ENCODE measurements at regions of chr15 and their contacts with region 1.

Region 1: DNA sequence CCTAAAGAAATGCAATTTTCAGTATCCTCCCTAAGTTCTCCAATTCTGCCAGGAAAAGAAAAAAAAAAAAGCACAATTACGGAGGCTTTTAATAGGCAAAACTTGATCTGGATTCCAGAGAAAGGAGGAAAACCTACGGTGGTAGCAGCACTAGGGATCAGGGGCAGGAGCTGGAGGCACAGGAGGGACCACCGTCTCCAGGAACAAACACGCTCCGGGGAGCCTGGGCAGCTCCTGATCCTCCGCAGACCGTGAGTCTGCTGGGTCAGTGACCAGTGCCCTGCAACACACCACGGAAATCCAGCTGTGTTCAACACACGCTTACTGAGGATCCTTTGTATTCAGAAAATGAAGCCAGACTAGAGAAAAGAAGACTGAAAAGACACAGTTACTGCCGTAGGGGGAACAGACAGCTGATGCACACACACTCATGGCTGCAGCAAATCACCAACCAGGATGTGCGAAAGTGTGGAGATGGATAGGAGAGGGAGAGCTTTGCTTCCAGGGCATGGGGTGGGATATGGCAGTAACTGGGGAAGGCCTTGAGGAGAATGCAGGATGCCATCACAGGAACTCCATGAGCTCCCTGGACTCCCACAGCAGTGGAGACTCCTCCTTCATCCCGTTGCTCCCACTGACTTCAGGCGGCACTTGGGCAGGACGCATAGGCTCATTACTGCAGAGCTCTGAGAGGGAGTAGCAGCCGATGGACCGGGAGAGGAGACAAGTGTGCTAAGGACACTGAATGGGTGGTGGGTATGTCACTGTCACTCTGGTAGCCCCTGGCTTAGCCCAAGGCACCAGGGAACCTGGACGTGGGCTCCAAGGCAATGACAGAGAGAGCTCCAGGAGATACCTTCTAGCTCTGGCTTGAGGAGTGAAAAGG is 167.0 kb downstream of the ATP10A start:
- DNase-seq: no peak
- H3K4me3 ChIP-seq: no peak overlapping the region
- H3K27me3 ChIP-seq: no peaks in the 10 kb centered on the region
- CTCF ChIP-seq: no peak

Region 2: GRCh38 chr15:25674913-25675312 is 21.2 kb before region 1 on chr15:
- CTCF ChIA-PET with region 1: no interaction called
- POLR2A ChIA-PET with region 1: no interaction called
- DNase-seq: no peak
- H3K4me3 ChIP-seq: no peak overlapping the region
- H3K27me3 ChIP-seq: no peaks in the 10 kb centered on the region
- CTCF ChIP-seq: no peak

Region 3: GRCh38 chr15:25710184-25710583 is 14.1 kb after region 1 on chr15:
- CTCF ChIA-PET with region 1: interaction called, 17 read pairs
- POLR2A ChIA-PET with region 1: no interaction called
- DNase-seq: no peak
- H3K4me3 ChIP-seq: no peak overlapping the region
- H3K27me3 ChIP-seq: no peaks in the 10 kb centered on the region
- CTCF ChIP-seq: peak; percentile 78

Region 4: DNA sequence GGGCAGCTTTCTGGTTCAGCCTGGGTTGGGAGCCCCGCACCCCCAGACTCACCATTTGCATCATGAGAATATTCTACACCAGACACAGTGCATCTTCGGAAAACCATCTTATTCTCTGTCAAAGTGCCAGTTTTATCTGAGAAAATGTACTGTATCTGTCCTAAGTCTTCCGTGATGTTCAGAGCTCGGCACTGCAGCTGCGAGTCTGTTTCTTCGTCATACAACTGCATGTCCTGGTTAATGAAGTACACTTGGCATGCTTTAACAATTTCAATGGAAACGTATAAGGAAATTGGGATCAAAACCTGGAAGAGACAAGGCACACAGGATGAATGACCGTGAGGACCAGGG is 25.5 kb after region 1 on chr15:
- CTCF ChIA-PET with region 1: no interaction called
- POLR2A ChIA-PET with region 1: no interaction called
- DNase-seq: no peak
- H3K4me3 ChIP-seq: no peak overlapping the region
- H3K27me3 ChIP-seq: no peaks in the 10 kb centered on the region
- CTCF ChIP-seq: no peak

Region 5: DNA sequence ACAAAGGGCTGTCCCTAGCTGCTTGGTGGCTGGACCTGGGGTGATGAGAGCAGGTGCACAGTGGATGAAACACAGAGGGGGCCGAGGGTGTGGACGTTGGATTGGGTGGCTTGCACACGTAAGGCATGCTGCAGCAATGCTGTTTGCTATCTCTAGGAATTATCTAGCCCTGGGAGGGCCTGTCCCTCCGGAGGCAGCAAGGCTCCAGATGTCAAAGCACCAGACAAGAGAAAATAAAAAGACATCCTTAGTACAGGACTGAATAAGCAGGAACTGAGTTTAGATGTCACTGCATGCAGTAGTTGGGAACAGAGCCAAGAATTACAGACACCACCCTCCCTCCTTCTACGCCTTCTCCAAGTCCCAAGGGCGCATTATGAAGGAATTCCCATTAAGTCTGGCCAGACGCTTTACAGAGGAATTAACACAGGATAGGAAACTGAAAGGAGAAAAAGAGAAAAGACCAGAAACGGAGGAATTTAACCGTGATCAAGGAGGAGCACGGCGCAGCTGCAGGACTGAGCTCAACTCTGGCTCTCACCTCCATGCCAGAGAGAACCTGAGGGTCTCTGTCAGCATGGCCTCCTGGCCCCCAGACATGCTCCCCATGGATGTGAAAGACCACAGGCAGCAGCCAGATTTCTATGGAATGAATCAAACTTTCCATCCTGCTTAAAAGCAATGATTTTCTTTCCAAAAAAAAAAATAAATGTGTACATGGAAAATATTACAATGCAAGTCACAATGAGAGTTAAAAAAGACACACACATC is 153.2 kb after region 1 on chr15:
- CTCF ChIA-PET with region 1: no interaction called
- POLR2A ChIA-PET with region 1: no interaction called
- DNase-seq: peak; percentile 80
- H3K4me3 ChIP-seq: peak overlapping the region; percentile 33
- H3K27me3 ChIP-seq: no peaks in the 10 kb centered on the region
- CTCF ChIP-seq: no peak

Measured in BJ (cell line).